Gastrocnemius medialis (tissue), 4 donors: ENCODE measurements at regions of chr11 and their contacts with region 1.

Region 1: GRCh38 chr11:108497317-108498045 is 703 bp downstream of the POGLUT3 start:
- DNase-seq: peak; percentile 88 to 93
- ATAC-seq: peak; percentile 99 to 100
- H3K4me3 ChIP-seq: peak overlapping the region; percentile 55 to 79 (median 62)
- H3K27ac ChIP-seq: peak overlapping the region; percentile 82 to 89 (median 86)
- H3K4me1 ChIP-seq: peaks cover 7% of the 10 kb centered on the region in 2 donors
- H3K27me3 ChIP-seq: no peaks in the 10 kb centered on the region
- CTCF ChIP-seq: no peak
- POLR2A ChIP-seq: peak; percentile 50 to 75

Region 2: DNA sequence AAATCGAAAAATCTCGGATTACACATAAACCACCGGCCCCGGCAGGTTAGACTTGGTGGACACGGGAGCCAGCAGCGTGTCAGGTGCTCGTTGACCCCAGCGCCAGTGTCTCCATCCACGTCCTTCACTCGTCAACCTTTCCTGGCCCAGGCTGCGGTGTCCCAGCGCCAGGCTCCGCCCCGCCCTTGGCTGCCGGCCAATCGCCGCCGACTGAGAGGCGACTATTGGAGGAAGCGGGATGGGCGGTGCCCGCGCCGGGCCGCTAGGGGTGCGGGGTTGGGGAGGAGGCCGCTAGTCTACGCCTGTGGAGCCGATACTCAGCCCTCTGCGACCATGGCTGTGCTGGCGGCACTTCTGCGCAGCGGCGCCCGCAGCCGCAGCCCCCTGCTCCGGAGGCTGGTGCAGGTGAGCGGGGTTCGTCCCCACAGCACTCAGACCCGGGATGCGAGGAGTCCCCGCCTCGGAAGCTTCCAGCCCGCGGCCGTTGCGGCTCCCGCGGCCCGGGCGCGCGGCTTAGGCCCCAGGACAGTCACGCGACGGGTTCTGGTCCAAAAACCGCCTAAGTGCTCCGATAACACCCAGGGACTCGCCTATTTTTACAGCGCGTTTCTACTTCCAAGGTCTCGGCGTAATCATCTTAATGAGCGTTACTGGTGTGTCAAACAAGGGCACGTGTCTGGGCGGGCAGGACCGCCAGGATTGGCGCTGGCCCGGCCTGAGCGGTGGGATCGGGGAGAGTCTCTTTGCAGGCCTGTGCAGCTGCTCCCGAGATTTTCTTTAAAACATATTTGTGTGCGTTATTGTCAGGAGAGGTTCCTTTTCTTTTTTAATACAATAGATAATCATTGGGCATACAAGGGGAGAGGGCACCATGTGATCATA is 376.0 kb before region 1 on chr11 and contains the start of gene ACAT1:
- in situ Hi-C with region 1: no loop called
- intact Hi-C with region 1: loop called (anchors 10 kb)
- DNase-seq: peak; percentile 96 to 99
- ATAC-seq: peak; percentile 72 to 82
- H3K4me3 ChIP-seq: peak within 1 kb of the TSS; percentile 63 to 84 (median 76)
- H3K27ac ChIP-seq: peak within 1 kb of the TSS; percentile 89 to 99 (median 93)
- H3K4me1 ChIP-seq: peaks cover 34 to 42% of the 10 kb centered on the region in 2 donors
- H3K27me3 ChIP-seq: no peaks in the 10 kb centered on the region
- CTCF ChIP-seq: peak; percentile 39 to 84 (median 60)
- POLR2A ChIP-seq: peak; percentile 98
- total RNA-seq, gene ACAT1: 288 to 950 (median 605) TPM

Region 3: GRCh38 chr11:108467091-108467823 is 30.2 kb before region 1 on chr11 and contains the start of gene C11orf65:
- in situ Hi-C with region 1: no loop called
- intact Hi-C with region 1: loop called (anchors 1 kb)
- DNase-seq: peak; percentile 95 to 96
- ATAC-seq: peak; percentile 99 to 100
- H3K4me3 ChIP-seq: peak within 1 kb of the TSS; percentile 66 to 88 (median 79)
- H3K27ac ChIP-seq: peak within 1 kb of the TSS; percentile 92 to 98 (median 96)
- H3K4me1 ChIP-seq: peaks cover 3 to 8% of the 10 kb centered on the region in 2 donors
- H3K27me3 ChIP-seq: no peaks in the 10 kb centered on the region
- CTCF ChIP-seq: no peak
- POLR2A ChIP-seq: peak; percentile 88 to 94
- total RNA-seq, gene C11orf65: 0.51 TPM in 1 of 4 donors, not detected in the others

Region 4: DNA sequence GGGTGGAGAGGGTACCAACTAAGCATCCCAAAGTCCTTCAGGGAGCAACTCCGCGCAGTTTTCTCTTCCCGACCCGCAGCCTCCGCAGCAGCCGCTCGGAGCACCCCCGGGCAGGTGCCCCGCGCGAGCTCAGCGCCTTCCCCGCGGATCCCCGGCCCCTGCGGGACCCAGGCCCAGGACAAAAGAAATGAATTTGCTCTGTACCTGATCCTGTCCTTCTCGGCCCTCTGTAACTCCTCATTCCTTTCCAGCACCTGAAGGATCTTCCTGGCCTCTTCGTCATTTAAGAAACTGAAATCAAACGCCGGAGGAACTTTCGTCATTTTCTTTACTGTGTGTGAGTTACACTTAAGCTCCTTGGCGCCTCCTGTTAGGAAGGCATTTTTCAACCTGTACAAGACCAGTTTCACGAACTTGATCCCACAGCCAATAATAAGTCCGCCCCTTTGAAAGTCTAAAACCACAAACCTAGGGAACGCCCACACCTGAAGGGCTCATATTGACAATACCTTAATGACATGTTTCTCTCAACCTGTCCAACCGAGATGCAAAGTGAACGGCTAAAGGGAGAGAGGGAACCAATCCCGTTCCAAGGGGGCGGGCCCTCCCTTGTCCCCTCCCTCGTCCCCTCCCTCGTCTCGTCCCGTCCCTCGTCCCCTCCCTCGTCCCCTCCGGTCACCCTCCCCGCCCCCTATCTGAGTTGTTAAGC is 95.9 kb after region 1 on chr11 and contains the start of gene EXPH5:
- in situ Hi-C with region 1: no loop called
- intact Hi-C with region 1: loop called (anchors 1 kb)
- DNase-seq: peak; percentile 58
- ATAC-seq: peak; percentile 80 to 90
- H3K4me3 ChIP-seq: peak within 1 kb of the TSS; percentile 61 to 71 (median 66)
- H3K27ac ChIP-seq: no peak within 1 kb of the TSS
- H3K4me1 ChIP-seq: peaks cover 3 to 10% of the 10 kb centered on the region in 2 donors
- H3K27me3 ChIP-seq: peaks cover 2 to 31% (median 12%) of the 10 kb centered on the region in 3 donors
- CTCF ChIP-seq: no peak
- POLR2A ChIP-seq: no peak
- total RNA-seq, gene EXPH5: 0.07 to 0.22 (median 0.20) TPM in 3 of 4 donors, not detected in the other

Region 5: DNA sequence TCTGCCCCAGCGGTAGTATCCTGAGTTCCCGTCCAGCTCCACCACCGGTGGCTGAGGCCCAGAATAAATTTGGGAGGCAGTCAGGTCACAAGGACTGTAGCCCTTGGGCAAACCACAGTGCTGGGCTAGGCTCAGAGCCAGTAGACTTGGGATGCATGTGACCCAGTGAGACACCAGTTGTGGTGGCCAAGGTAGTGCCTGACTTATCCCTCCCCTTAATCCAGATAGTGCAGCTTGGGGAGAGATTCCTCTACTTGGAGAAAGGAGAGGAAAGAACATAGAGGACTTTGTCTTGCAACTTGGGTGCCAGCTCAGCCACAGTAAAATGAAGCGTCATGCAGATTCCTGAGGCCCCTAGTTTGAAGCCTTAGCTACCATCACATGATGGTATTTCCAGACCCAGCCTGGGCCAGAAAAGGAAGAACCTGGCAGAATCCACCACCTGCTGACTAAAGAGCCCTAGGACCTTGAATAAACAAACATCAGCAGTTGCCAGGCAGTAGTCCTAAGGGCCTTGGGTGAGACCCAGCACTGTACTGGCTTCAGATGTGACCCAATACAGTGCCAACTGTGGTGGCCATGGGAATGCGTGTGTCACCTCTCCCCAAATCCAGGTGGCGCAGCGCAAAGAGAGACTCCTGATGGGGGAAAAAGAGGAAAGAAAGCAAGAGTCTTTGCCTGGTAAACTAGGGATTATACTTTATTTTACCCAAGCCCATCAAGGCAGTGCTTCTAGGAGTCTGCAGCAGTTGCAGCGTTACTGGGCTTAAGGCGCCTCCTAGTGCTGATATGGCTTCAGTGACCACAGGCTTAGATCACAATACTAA is 150.4 kb after region 1 on chr11:
- in situ Hi-C with region 1: no loop called
- intact Hi-C with region 1: loop called (anchors 5 kb)
- DNase-seq: peak; percentile 29 to 68
- ATAC-seq: peak; percentile 84 to 85
- H3K4me3 ChIP-seq: no peak overlapping the region
- H3K27ac ChIP-seq: peak overlapping the region; percentile 13 to 67 (median 42)
- H3K4me1 ChIP-seq: peaks cover 0 to 6% of the 10 kb centered on the region in 2 donors
- H3K27me3 ChIP-seq: no peaks in the 10 kb centered on the region
- CTCF ChIP-seq: peak; percentile 46 to 63 (median 51)
- POLR2A ChIP-seq: no peak

Region 6: DNA sequence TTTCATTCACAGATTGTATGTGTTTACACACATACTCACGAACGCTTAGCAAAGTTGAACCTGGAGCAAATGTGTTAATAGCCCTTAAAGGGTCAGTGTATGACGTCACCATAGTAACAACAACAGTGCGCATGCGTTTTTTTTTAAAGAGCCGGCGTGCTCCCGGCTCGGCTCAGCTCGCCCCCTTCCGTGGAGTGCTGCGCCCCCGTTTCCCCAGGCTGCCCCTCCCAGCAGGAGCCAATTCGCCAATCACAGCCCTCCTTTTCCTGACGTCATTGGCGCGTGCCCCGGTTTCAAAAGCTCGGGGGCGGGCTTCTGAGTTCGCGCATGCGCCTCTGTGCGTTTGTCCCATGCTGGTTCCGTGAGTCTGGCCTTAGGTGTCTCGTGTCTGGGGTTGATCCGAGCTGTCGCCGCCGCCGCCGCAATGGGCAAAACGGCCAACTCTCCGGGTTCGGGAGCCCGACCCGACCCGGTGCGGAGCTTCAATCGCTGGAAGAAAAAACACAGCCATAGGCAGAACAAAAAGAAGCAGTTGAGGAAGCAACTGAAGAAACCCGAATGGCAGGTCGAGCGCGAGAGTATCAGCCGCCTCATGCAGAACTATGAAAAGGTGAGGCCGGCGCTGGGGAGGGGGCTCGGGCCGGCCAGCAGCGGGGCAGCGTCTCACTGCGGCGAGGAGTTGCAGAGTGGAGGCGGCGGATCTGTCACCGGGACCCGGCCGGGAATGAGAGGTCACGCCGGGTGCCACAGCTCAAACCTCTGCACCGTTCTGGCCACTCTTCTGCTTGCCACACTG is 167.4 kb after region 1 on chr11 and contains the start of gene DDX10:
- in situ Hi-C with region 1: no loop called
- intact Hi-C with region 1: loop called (anchors 2 kb)
- DNase-seq: peak; percentile 98
- ATAC-seq: peak; percentile 98
- H3K4me3 ChIP-seq: peak within 1 kb of the TSS; percentile 67 to 88 (median 74)
- H3K27ac ChIP-seq: peak within 1 kb of the TSS; percentile 80 to 89 (median 82)
- H3K4me1 ChIP-seq: peaks cover 20 to 23% of the 10 kb centered on the region in 2 donors
- H3K27me3 ChIP-seq: no peaks in the 10 kb centered on the region
- CTCF ChIP-seq: peak in 3 of 5 experiments; percentile 8 to 26 (median 20)
- POLR2A ChIP-seq: peak; percentile 65 to 82
- total RNA-seq, gene DDX10: 5.0 to 15.0 (median 10.5) TPM